Mammary epithelial cell (primary cell): ENCODE measurements at regions of chr20 and their contacts with region 1.

Region 1: GRCh38 chr20:1684872-1685271 is 27.3 kb upstream of the SIRPG start:
- DNase-seq: no peak
- H3K4me3 ChIP-seq: no peak overlapping the region
- H3K27ac ChIP-seq: no peak overlapping the region
- H3K4me1 ChIP-seq: no peaks in the 10 kb centered on the region
- H3K27me3 ChIP-seq: no peaks in the 10 kb centered on the region
- CTCF ChIP-seq: no peak

Region 2: GRCh38 chr20:1734269-1734858 is 49.5 kb after region 1 on chr20:
- CTCF ChIA-PET with region 1: no interaction called
- dilution Hi-C with region 1: loop called (anchors 5 kb)
- in situ Hi-C with region 1: no loop called
- intact Hi-C with region 1: no loop called
- DNase-seq: peak; percentile 36
- H3K4me3 ChIP-seq: no peak overlapping the region
- H3K27ac ChIP-seq: no peak overlapping the region
- H3K4me1 ChIP-seq: no peaks in the 10 kb centered on the region
- H3K27me3 ChIP-seq: no peaks in the 10 kb centered on the region
- CTCF ChIP-seq: peak; percentile 8 to 54